ENCODE measurements at regions of chr22 and their contacts with region 1.

Region 1: GRCh38 chr22:50582562-50583293 is at the start of gene CHKB:
- DNase-seq: peak; percentile 99
- ATAC-seq: peak; percentile 97
- H3K4me3 Mint-ChIP-seq: peak within 1 kb of the TSS; percentile 86
- H3K27ac Mint-ChIP-seq: peak within 1 kb of the TSS; percentile 84
- H3K4me1 Mint-ChIP-seq: peaks cover 25% of the 10 kb centered on the region
- H3K27me3 Mint-ChIP-seq: no peaks in the 10 kb centered on the region
- total RNA-seq, gene CHKB: 68.2 to 79.7 TPM

Region 2: DNA sequence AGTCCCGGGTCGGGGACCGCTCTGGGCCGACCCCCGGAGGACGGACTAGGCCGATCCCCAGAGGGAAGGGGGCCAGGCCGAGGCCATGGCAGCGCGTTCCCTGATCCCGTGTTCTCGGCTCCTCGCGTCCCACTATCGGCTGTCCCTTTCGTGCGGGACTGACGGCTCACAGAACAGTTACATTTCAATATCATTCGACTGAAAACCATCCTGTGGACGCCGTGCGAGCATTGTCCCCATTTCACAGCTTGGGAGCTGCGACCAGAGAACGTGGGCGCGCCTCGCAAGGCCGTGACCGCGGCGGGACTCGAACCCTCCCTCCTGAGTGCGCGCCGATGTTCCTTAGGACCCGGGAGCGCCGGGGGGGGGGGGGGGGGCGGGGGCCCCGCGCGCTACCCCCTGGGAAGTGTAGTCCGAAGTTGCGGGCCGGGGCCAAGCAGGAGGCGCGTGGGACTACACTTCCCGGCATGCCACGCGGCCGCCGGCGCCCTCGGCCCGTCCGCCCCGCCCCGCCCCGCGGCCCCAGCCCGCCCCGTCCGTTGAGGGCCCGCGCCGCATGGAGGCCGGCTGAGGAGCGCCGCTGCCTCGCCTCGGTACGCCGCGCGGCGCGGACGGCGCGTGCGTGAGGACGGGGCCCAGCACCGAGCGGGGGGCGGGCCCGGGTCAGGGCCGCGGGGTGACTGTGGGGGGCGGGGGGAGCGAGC is 397.2 kb before region 1 on chr22 and contains the start of gene TRABD:
- CTCF ChIA-PET with region 1: no interaction called
- POLR2A ChIA-PET with region 1: no interaction called
- intact Hi-C with region 1: loop called in 1 of 2 experiments (anchors 1 kb)
- DNase-seq: peak; percentile 95
- ATAC-seq: peak; percentile 80
- H3K4me3 Mint-ChIP-seq: peak within 1 kb of the TSS; percentile 84
- H3K27ac Mint-ChIP-seq: peak within 1 kb of the TSS; percentile 92
- H3K4me1 Mint-ChIP-seq: peaks cover 27% of the 10 kb centered on the region
- H3K27me3 Mint-ChIP-seq: no peaks in the 10 kb centered on the region
- total RNA-seq, gene TRABD: 60.7 to 74.5 TPM

Region 3: DNA sequence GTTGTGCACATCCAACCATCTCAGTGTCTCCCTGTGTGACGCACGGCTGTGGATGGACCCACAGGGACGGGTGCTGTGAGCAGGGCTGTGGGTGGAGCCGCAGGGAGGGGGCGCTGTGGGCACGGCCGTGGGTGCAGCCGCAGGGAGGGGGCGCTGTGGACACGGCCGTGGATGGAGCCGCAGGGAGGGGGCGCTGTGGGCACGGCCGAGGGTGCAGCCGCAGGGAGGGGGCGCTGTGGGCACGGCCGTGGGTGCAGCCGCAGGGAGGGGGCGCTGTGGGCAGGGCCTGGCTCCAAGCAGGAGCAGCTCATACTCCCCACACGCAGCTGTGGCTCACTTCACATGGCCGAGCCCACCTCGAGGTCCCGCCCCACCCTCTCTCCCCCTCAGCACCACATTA is 306.6 kb before region 1 on chr22:
- CTCF ChIA-PET with region 1: no interaction called
- POLR2A ChIA-PET with region 1: no interaction called
- intact Hi-C with region 1: loop called in 1 of 2 experiments (anchors 2 kb)
- DNase-seq: peak; percentile 81
- ATAC-seq: peak; percentile 70
- H3K4me3 Mint-ChIP-seq: no peak overlapping the region
- H3K27ac Mint-ChIP-seq: no peak overlapping the region
- H3K4me1 Mint-ChIP-seq: peaks cover 1% of the 10 kb centered on the region
- H3K27me3 Mint-ChIP-seq: peaks cover 2% of the 10 kb centered on the region

Region 4: GRCh38 chr22:50474668-50475492 is 107.8 kb before region 1 on chr22 and contains the start of gene SBF1:
- CTCF ChIA-PET with region 1: no interaction called
- POLR2A ChIA-PET with region 1: no interaction called
- intact Hi-C with region 1: loop called in 1 of 2 experiments (anchors 1 kb)
- DNase-seq: peak; percentile 95
- ATAC-seq: peak; percentile 78
- H3K4me3 Mint-ChIP-seq: peak within 1 kb of the TSS; percentile 89
- H3K27ac Mint-ChIP-seq: peak within 1 kb of the TSS; percentile 83
- H3K4me1 Mint-ChIP-seq: peaks cover 42% of the 10 kb centered on the region
- H3K27me3 Mint-ChIP-seq: peaks cover 2% of the 10 kb centered on the region
- total RNA-seq, gene SBF1: 97.6 TPM

Region 5: DNA sequence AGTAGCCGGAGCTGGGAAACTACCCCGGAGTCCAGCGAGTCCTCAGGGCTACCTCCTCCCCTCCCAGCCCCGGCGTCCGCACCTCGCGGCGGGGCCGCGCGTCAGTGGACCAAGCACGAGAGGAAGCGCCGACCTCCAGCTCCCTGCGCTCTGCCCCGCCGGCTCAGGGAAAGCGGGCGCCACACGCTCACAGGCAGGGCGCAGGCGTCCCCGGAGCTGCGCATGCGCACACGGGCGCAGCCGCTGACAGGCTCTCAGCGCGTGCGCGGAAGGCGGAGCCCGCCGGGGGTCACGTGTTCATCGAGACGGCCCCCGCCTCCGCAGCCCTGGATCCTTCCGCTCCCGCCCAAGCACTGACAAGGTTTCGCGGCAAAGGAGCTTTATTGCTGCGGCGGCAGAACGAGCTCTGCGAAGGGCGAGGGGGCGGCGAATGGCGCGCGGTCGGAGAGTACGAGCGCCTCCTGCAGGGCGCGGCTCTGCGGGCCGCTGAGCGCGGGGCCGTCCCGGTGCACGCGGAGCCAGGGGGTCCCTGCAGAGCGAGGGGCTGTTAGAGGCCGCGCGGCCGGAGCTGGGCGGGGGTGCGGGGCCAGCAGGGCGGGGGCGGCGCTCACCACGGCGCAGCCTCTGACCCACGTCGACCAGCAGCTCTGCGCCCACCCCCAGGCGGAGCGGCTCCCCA is 57.2 kb before region 1 on chr22 and contains the start of gene SCO2:
- CTCF ChIA-PET with region 1: interaction called, 14 read pairs
- POLR2A ChIA-PET with region 1: interaction called, 11 read pairs
- intact Hi-C with region 1: loop called (anchors 1 to 2 kb)
- DNase-seq: peak; percentile 99
- ATAC-seq: peak; percentile 56
- H3K4me3 Mint-ChIP-seq: peak within 1 kb of the TSS; percentile 77
- H3K27ac Mint-ChIP-seq: peak within 1 kb of the TSS; percentile 87
- H3K4me1 Mint-ChIP-seq: peaks cover 34% of the 10 kb centered on the region
- H3K27me3 Mint-ChIP-seq: no peaks in the 10 kb centered on the region
- total RNA-seq, gene SCO2: 2.4 to 5.6 TPM

Region 6: GRCh38 chr22:50544078-50544745 is 38.5 kb before region 1 on chr22:
- CTCF ChIA-PET with region 1: interaction called, 3 read pairs
- POLR2A ChIA-PET with region 1: interaction called, 3 read pairs
- intact Hi-C with region 1: loop called in 1 of 2 experiments (anchors 1 kb)
- DNase-seq: peak; percentile 94
- ATAC-seq: peak; percentile 49
- H3K4me3 Mint-ChIP-seq: peak overlapping the region; percentile 35
- H3K27ac Mint-ChIP-seq: peak overlapping the region; percentile 78
- H3K4me1 Mint-ChIP-seq: peaks cover 61% of the 10 kb centered on the region
- H3K27me3 Mint-ChIP-seq: no peaks in the 10 kb centered on the region

Region 7: GRCh38 chr22:50627642-50628542 is 45.2 kb after region 1 on chr22 and contains the start of gene ARSA:
- CTCF ChIA-PET with region 1: no interaction called
- POLR2A ChIA-PET with region 1: no interaction called
- intact Hi-C with region 1: loop called in 1 of 2 experiments (anchors 1 kb)
- DNase-seq: peak; percentile 87
- ATAC-seq: peak; percentile 94
- H3K4me3 Mint-ChIP-seq: peak within 1 kb of the TSS; percentile 76
- H3K27ac Mint-ChIP-seq: peak within 1 kb of the TSS; percentile 75
- H3K4me1 Mint-ChIP-seq: peaks cover 16% of the 10 kb centered on the region
- H3K27me3 Mint-ChIP-seq: no peaks in the 10 kb centered on the region
- total RNA-seq, gene ARSA: 14.9 to 15.4 TPM

Measured in activated CD4-positive, alpha-beta T cell treated with anti-CD3 and anti-CD28 coated beads for 36 hours (primary cell).